Naive thymus-derived CD8-positive, alpha-beta T cell (primary cell): ENCODE measurements at regions of chr2 and their contacts with region 1.

Region 1: DNA sequence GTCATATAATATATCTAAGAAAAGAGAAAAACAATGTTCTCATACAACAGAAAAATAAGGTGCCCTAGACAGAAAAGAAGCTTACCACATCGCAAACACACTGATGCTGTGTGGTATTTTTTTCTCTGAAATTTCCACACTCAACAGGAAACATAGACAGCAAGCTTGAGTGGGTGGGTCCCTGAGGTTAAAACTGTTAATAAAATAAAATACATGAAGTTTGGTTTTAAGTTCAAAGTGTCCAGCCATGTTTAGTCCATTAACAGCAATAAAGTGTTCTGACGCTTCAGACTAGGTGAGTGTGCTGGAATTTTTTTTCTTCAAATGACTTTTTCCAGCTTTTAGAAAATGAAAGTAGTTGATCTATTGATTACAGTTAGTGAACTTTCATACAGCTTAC is 83.3 kb upstream of the EPB41L5 start:
- DNase-seq: peak in 6 of 10 donors; percentile 4 to 73 (median 44)
- ATAC-seq: peak; percentile 89 to 96
- H3K4me3 Mint-ChIP-seq: peak overlapping the region; percentile 74 to 91 (median 82)
- H3K27ac Mint-ChIP-seq: peak overlapping the region; percentile 84 to 98 (median 94)
- H3K4me1 Mint-ChIP-seq: peaks cover 24 to 72% (median 53%) of the 10 kb centered on the region in 4 donors
- H3K27me3 Mint-ChIP-seq: no peaks in the 10 kb centered on the region

Region 2: GRCh38 chr2:119366649-119367471 is 562.7 kb before region 1 on chr2 and contains the starts of genes C2orf76 and DBI:
- POLR2A ChIA-PET with region 1: interaction called, 10 read pairs
- DNase-seq: peak; percentile 85 to 93 (median 90)
- ATAC-seq: peak; percentile 91 to 92
- H3K4me3 Mint-ChIP-seq: peak within 1 kb of the TSS; percentile 92 to 99 (median 97)
- H3K27ac Mint-ChIP-seq: peak within 1 kb of the TSS; percentile 89 to 99 (median 96)
- H3K4me1 Mint-ChIP-seq: peaks cover 34 to 65% (median 59%) of the 10 kb centered on the region in 4 donors
- H3K27me3 Mint-ChIP-seq: no peaks in the 10 kb centered on the region
- polyA plus RNA-seq, gene C2orf76: 16.3 to 37.5 (median 23.6) TPM
- polyA plus RNA-seq, gene DBI: 249 to 374 (median 295) TPM

Region 3: DNA sequence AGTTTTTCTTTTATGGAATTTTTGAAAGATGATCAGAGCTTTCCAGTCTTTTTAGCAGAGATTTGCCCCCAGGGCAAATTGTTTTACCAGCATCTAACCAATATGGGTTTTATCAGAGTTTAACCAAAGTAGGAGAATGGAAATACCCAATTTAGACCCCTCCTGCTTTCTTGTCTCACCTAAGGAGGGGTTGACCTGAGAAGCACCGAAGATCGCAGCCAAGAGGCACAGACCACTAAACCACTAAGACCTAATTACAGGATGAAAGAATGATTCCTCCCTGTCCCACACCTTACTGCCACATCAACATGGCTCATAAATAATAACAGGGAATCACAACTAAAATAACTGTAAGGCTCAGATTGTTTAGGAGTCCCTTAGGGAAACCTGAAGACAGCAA is 28.5 kb before region 1 on chr2:
- POLR2A ChIA-PET with region 1: no interaction called
- DNase-seq: no peak
- ATAC-seq: no peak
- H3K4me3 Mint-ChIP-seq: no peak overlapping the region
- H3K27ac Mint-ChIP-seq: peak overlapping the region in 1 of 10 donors; percentile 33
- H3K4me1 Mint-ChIP-seq: peaks cover 0 to 13% (median 4%) of the 10 kb centered on the region in 4 donors
- H3K27me3 Mint-ChIP-seq: no peaks in the 10 kb centered on the region

Region 4: DNA sequence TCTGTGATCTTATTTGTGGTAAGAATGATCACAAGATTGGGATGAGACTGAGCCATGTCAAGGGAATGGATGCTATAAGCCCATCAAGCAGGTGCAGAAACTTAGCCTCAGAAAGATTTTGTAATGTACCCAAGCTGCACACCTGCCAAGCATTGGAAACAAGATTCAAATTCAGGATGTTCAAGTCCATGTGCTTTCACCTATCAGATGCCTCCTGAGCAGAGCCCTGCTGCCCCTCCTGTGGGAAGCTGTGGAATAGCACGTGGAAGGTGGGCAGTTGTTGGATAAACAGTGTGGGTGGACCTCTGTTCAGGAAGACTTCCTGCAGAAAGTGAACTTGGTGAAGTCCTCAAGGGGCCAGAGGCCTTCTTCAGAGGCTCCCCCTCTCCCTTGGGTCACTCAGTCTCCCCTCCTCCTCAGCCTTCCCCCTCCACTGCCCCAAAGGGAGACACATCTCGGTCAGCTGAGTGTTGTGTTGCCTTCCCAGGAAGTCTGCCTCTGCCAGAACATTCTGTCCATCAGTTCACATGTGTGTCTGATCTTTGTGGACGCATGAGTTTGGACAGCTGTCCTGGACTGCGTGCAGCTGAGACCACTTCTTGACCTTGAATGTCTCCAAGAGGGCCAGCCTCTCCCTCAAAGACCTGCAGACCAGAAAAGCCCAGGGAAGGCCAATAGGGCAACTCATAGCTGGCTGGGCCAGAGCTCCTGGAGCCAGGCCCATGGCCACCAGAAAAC is 602.5 kb after region 1 on chr2:
- POLR2A ChIA-PET with region 1: no interaction called
- DNase-seq: no peak
- ATAC-seq: no peak
- H3K4me3 Mint-ChIP-seq: no peak overlapping the region
- H3K27ac Mint-ChIP-seq: no peak overlapping the region
- H3K4me1 Mint-ChIP-seq: no peaks in the 10 kb centered on the region
- H3K27me3 Mint-ChIP-seq: peaks cover 2 to 15% (median 10%) of the 10 kb centered on the region in 5 donors